ENCODE measurements at regions of chr10 and their contacts with region 1.

Region 1: GRCh38 chr10:103576862-103577261 is 83.4 kb downstream of the NEURL1 start:
- DNase-seq: no peak
- H3K4me3 ChIP-seq: no peak overlapping the region
- H3K27ac ChIP-seq: no peak overlapping the region
- H3K4me1 ChIP-seq: no peaks in the 10 kb centered on the region
- H3K27me3 ChIP-seq: peaks cover 13 to 16% of the 10 kb centered on the region in 2 experiments
- CTCF ChIP-seq: no peak
- POLR2A ChIP-seq: no peak

Region 2: DNA sequence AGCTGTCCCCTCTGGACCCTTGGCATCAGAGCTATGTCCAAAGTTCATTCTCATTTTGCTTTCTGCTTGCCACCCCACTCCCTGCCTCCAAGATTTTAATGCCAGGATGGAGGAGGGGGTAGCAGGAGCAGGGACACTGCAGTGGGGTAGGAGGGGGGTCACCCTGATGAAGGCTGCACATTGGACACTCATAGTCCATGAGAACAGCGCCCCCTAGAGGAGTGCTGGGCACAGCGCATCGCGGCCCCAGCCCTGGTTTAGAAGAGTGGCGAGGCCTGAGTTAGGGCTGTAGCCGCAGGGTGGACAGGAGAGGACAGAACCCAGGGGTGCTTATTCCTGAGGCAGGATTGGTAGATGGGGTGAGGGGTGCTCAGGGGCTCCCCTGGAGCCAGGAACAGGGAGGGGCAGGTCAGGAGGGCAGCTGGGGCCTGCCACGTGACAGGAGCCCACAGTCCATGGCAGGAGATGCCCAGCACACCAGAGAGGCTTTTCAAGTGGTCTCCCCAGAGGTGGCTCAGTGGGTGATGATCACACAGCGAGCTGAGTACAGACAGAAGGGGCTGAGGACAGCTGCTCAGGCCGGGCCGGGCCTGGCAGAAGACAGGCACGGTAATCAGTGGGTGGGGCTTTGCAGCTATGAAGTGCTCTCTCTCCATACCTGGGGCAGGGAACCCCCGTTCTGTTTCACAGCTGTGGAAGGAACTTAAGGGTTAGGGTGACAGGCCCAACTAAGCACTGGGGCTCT is 11.9 kb before region 1 on chr10:
- CTCF ChIA-PET with region 1: interaction called, 11 read pairs
- POLR2A ChIA-PET with region 1: no interaction called
- dilution Hi-C with region 1: no loop called
- intact Hi-C with region 1: no loop called
- DNase-seq: no peak
- H3K4me3 ChIP-seq: no peak overlapping the region
- H3K27ac ChIP-seq: no peak overlapping the region
- H3K4me1 ChIP-seq: no peaks in the 10 kb centered on the region
- H3K27me3 ChIP-seq: peaks cover 0 to 6% of the 10 kb centered on the region in 2 experiments
- CTCF ChIP-seq: peak; percentile 73 to 75
- POLR2A ChIP-seq: no peak

Measured in endothelial cell of umbilical vein (primary cell).